KBM-7 (cell line): ENCODE measurements at regions of chr12 and their contacts with region 1.

Region 1: GRCh38 chr12:90978117-90978770 is 23.3 kb upstream of the CCER1 start:
- DNase-seq: peak; percentile 49

Region 2: DNA sequence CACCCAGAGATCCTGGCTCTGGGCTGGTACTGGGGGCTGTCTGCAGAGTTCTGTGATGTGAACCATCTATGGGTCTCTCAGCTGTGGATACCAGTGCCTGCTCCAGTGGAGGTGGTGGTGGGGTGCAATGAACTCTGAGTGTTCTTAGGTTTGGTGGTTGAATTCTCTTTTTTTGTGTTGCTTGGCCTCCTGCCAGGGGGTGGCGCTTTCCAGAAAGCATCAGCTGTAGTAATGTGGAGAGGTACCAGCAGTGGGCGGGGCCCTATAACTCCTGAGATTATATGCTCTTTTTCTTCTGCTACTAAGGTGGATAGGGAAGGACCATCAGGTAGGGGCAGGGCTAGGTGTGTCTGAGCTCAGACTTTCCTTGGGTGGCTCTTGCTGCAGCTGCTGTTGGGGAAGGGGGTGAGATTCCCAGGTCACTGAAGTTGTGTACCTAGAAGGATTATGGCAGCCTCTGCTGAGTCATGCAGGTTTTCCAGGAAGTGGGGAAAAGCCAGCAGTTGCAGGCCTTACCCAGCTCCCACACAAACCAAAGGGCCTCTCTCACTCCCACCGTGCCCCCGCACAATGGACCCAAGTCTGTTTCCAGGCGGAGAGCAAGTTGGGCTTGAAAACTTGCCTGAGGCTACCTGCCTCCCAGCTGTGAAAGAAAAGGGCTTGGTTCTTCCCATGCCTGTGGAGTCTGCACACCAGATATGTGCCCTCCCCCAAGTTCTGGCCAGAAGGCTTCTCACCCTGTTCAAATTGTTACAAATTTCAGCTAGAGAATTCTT is 41.8 kb before region 1 on chr12:
- in situ Hi-C with region 1: no loop called
- DNase-seq: no peak

Region 3: DNA sequence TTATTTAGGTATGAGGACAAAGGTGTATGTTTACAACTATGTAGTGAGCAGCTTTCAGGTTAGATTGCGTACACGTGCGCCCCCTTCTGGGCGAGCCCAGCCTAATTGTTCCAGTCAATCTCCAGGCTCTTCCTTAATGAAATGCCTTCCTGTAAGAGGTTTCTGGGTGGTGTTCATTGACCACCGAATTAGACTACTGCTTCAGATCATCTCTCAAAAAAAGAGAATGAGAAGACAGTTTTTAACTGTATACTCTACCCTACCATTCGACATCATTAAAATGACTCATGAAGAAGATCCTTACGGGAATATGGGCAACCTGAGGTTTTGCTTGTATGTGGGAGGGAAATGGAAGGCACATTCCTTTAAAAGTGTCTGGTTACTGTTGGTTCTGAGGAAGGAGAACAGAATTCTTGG is 130.9 kb after region 1 on chr12:
- in situ Hi-C with region 1: loop called (anchors 25 kb)
- DNase-seq: peak; percentile 77

Region 4: DNA sequence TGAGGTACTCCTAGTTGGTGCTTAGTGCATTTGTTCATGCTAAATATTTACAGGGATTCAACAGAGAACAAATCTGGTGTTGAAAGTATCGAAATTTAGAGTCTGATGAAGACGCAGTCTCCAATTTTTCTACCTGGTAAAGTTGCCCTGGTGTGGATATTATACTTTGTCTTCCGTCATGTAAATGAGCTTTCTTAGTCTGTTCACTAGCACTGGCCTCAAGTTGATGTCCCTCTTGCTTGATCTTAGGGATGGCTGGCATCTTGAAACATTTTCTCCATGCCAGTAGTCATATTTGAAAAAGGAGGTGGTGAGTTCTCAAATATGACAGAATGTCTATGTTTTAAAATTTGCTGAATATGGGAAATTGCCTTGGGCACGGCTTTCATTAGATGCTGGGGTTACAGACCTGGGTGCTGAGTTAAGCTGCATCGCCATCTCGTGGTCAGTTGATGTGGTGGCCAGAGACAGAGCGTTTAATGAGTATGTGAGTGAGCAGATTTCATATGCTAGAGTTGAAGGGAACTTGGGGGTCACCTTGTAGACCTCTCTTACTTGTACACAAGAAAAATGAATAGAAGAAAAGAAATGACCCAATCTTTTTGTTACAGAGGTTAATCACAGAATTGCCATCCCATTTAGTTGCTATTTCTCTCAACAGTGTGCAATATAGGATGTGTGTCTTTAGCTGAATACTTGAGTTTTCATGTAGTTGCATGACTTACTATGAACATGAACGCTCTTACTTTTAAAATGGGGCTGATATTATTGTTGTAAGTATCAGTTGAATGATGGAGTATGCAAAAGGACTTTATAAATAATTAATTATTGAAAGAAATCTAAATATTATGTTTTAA is 377.1 kb after region 1 on chr12:
- in situ Hi-C with region 1: loop called (anchors 25 kb)
- DNase-seq: peak; percentile 67